Tibial artery (tissue), 4 donors: ENCODE measurements at regions of chr11 and their contacts with region 1.

Region 1: DNA sequence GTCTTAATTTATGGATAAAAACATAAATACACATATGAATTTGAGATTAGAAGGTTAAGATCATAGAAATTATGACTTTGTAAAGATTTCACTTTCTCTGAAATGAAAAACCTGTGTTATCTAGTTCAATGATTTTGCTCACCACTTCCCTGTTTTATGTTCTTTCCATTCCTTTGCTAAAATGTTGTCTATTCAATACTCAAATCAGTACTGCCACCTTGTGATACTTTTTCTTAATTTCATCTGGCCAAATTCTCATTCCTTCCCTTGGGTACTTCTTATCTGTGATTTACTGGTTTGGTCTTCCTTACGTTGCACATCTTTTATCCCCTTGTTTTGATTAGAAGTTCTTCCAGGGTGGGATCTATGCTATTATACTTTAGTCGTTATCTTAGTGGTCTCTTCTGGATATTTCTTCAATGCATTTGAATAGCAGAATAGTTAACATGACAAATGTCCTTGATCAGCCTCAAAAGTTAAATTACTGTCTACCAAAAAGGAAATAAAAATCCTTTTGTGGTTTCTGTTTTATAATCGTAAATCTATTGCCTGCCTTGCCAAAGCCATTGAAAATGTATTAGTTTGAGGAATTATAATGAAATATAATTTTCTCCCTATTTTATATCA is 197.0 kb downstream of the PGR start:
- DNase-seq: no peak
- H3K4me3 ChIP-seq: no peak overlapping the region
- H3K27ac ChIP-seq: no peak overlapping the region
- H3K4me1 ChIP-seq: no peaks in the 10 kb centered on the region
- H3K27me3 ChIP-seq: no peaks in the 10 kb centered on the region
- CTCF ChIP-seq: peak; percentile 54 to 56

Region 2: DNA sequence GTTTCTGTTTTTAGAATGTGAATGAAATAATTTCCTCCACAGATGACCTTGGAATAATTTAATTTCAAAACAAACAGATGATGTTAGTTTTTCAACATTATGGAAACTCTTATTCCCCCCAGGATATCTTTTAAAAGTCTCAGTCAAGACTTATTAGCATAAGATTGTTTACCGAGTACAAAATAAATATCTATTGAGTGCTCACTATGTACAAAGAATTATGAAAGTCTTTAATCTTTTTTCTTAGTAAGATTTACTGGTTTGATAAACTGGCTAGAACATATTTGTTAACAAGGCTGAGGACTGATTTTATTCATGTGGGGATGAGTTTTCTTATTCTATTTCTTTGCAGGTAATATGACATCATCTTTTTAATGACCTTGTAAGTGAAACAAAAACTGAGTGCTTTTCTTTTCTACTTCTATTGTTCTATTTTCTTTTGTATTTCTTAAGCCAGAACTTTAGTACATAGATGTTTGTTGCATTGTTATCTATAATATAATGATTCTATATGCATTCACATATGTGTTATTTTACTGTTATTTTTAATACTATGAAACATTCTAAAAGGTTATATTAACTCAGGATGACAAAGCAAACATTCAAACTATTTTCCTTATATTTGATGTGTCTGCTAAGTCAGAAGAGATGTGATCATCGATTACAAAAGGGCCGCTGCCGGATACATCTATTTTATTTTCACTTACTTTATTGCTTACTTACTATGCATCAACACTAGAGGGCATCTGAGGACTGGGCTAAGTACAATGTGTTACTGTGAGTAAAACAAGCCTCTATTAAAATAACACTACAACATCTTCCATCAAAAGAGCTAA is 356.5 kb before region 1 on chr11:
- intact Hi-C with region 1: loop called (anchors 2 kb)
- DNase-seq: no peak
- H3K4me3 ChIP-seq: no peak overlapping the region
- H3K27ac ChIP-seq: no peak overlapping the region
- H3K4me1 ChIP-seq: no peaks in the 10 kb centered on the region
- H3K27me3 ChIP-seq: no peaks in the 10 kb centered on the region
- CTCF ChIP-seq: peak; percentile 71 to 81

Region 3: DNA sequence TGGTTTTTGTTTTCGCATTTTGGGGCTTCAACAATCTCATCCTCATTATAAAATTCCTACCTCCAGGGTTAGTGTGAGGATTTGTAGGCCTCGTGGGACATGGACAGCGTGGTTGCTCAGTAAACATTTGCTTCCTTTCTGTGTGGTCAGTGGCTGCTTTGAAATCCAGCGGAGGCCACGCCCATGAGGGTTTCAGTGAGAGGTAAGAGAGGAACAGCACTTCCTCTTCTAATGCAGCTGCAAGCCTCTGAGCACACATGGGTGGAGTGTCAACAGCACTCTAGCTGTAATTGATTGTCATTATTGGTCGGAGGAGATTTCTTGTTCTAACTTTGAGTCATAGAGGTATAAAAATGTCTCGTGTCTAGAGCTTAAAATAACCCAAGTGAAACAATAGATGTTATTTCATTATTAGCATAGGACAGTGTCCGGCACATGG is 251.5 kb before region 1 on chr11:
- intact Hi-C with region 1: loop called (anchors 2 kb)
- DNase-seq: peak in 1 of 2 donors; percentile 77
- H3K4me3 ChIP-seq: no peak overlapping the region
- H3K27ac ChIP-seq: no peak overlapping the region
- H3K4me1 ChIP-seq: peaks cover 0 to 16% (median 3%) of the 10 kb centered on the region in 4 donors
- H3K27me3 ChIP-seq: no peaks in the 10 kb centered on the region
- CTCF ChIP-seq: no peak